B cell (primary cell): ENCODE measurements at regions of chr12 and their contacts with region 1.

Region 1: GRCh38 chr12:92431146-92431545 is 271.6 kb upstream of the PLEKHG7 start:
- DNase-seq: peak; percentile 60
- ATAC-seq: peak; percentile 56
- H3K4me3 ChIP-seq: no peak overlapping the region
- H3K4me3 Mint-ChIP-seq: no peak overlapping the region
- H3K27ac ChIP-seq: no peak overlapping the region
- H3K27ac Mint-ChIP-seq: peak overlapping the region; percentile 71
- H3K4me1 ChIP-seq: peaks cover 52 to 55% of the 10 kb centered on the region in 2 donors
- H3K4me1 Mint-ChIP-seq: peaks cover 73% of the 10 kb centered on the region
- H3K27me3 ChIP-seq: no peaks in the 10 kb centered on the region
- H3K27me3 Mint-ChIP-seq: no peaks in the 10 kb centered on the region
- CTCF ChIP-seq: peak; percentile 32

Region 2: GRCh38 chr12:92158796-92159439 is 272.2 kb before region 1 on chr12:
- CTCF ChIA-PET with region 1: no interaction called
- POLR2A ChIA-PET with region 1: interaction called, 10 read pairs
- intact Hi-C with region 1: no loop called
- DNase-seq: peak; percentile 67
- ATAC-seq: peak; percentile 69
- H3K4me3 ChIP-seq: peak overlapping the region; percentile 9 to 55 (median 41)
- H3K4me3 Mint-ChIP-seq: peak overlapping the region; percentile 81
- H3K27ac ChIP-seq: peak overlapping the region; percentile 87 to 89
- H3K27ac Mint-ChIP-seq: peak overlapping the region; percentile 88
- H3K4me1 ChIP-seq: peaks cover 79 to 82% of the 10 kb centered on the region in 2 donors
- H3K4me1 Mint-ChIP-seq: peaks cover 87% of the 10 kb centered on the region
- H3K27me3 ChIP-seq: no peaks in the 10 kb centered on the region
- H3K27me3 Mint-ChIP-seq: no peaks in the 10 kb centered on the region
- CTCF ChIP-seq: no peak

Region 3: GRCh38 chr12:92419201-92419600 is 11.9 kb before region 1 on chr12:
- CTCF ChIA-PET with region 1: interaction called, 4 read pairs
- POLR2A ChIA-PET with region 1: interaction called, 10 read pairs
- intact Hi-C with region 1: no loop called
- DNase-seq: no peak
- ATAC-seq: no peak
- H3K4me3 ChIP-seq: no peak overlapping the region
- H3K4me3 Mint-ChIP-seq: no peak overlapping the region
- H3K27ac ChIP-seq: no peak overlapping the region
- H3K27ac Mint-ChIP-seq: peak overlapping the region; percentile 34
- H3K4me1 ChIP-seq: peaks cover 14 to 20% of the 10 kb centered on the region in 2 donors
- H3K4me1 Mint-ChIP-seq: peaks cover 42% of the 10 kb centered on the region
- H3K27me3 ChIP-seq: no peaks in the 10 kb centered on the region
- H3K27me3 Mint-ChIP-seq: no peaks in the 10 kb centered on the region
- CTCF ChIP-seq: no peak

Region 4: DNA sequence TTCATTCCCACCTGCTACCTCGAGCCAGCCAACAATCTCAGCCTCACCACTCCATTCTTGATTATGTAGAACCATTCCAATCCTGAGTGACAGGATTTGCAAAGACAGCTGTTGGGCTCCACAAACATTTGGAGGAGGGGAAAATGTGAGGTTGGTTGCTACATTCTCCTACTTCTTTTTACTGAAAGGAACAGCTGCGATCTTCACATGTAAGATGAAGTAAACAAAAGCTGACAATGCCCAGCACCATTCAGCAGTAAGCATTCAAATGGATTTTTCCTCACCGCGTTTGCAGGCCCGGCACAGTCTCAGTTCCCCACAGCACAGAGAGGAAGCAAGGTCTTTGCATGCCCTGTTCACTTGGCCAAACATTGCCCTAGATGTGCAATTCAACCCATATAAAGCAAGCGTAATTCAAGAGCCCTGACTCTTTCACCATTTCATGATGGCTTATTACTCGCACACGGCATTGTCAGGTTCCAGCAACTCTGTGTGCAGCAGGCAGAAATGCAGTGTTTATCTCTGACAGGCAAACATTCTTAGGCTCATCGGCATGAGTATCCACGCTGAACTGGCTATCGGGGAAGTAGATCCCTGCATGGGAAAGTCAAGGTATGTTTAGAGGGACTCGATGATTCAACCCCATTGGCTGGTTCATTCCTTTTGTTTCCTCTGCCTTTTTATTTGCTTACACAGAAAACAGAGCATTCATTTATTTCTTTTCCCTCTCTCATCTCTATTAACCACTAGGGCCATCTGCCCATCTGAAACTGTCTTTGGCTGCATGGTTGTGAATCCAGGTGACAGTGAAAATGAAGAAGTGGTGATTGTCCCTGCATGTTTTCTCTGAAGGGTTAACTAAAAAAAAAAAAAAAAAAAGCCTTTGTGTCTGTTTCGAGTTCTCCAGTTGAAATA is 35.5 kb after region 1 on chr12:
- CTCF ChIA-PET with region 1: interaction called, 4 read pairs
- POLR2A ChIA-PET with region 1: interaction called, 11 read pairs
- intact Hi-C with region 1: loop called (anchors 5 kb)
- DNase-seq: peak; percentile 87
- ATAC-seq: peak; percentile 76
- H3K4me3 ChIP-seq: peak overlapping the region; percentile 61 to 93 (median 68)
- H3K4me3 Mint-ChIP-seq: peak overlapping the region; percentile 94
- H3K27ac ChIP-seq: peak overlapping the region; percentile 85 to 93
- H3K27ac Mint-ChIP-seq: peak overlapping the region; percentile 95
- H3K4me1 ChIP-seq: peaks cover 80 to 83% of the 10 kb centered on the region in 2 donors
- H3K4me1 Mint-ChIP-seq: peaks cover 81% of the 10 kb centered on the region
- H3K27me3 ChIP-seq: no peaks in the 10 kb centered on the region
- H3K27me3 Mint-ChIP-seq: no peaks in the 10 kb centered on the region
- CTCF ChIP-seq: no peak